Activated CD4-positive, alpha-beta memory T cell treated with anti-CD3 and anti-CD28 coated beads for 36 hours (primary cell): ENCODE measurements at regions of chr7 and their contacts with region 1.

Region 1: DNA sequence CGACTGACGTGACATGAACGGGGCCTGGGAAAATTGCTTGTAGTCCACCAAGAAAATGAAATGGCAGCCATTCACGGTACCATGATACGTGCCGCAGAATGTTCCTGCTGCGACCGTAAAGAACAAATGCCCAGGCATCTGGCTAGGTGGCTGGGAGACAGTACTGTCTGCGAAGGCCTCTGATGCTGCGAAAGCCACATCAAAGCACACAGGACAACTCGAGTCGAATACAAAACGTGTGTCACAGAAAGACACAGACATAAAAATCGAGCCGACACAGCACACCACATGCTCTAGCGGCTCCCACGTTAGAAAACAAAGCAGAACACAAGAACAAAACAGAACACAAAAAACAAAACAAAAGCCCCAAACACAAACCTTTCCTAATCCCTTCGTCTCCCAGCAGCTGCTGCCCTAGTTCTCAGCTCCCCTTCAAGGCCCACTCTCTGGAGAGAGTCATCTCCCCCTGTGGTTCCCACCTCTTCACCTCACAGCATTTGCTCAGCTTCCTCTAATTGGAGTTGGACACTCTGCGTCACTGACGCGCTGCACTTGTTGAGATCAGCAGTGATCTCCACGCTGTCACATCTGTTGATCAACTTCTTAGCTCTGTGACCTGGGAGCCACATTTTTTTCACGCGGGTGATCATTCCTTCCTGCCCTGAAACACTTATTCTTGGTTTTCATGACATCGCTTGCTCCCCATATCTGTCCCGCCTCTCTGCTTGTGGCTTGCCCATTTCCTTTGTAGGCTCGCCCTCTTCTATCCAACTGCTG is 112.2 kb downstream of the CLEC2L start:
- DNase-seq: peak; percentile 72
- H3K4me3 Mint-ChIP-seq: peak overlapping the region; percentile 42
- H3K27ac Mint-ChIP-seq: peak overlapping the region; percentile 63
- H3K4me1 Mint-ChIP-seq: peaks cover 26% of the 10 kb centered on the region
- H3K27me3 Mint-ChIP-seq: no peaks in the 10 kb centered on the region

Region 2: DNA sequence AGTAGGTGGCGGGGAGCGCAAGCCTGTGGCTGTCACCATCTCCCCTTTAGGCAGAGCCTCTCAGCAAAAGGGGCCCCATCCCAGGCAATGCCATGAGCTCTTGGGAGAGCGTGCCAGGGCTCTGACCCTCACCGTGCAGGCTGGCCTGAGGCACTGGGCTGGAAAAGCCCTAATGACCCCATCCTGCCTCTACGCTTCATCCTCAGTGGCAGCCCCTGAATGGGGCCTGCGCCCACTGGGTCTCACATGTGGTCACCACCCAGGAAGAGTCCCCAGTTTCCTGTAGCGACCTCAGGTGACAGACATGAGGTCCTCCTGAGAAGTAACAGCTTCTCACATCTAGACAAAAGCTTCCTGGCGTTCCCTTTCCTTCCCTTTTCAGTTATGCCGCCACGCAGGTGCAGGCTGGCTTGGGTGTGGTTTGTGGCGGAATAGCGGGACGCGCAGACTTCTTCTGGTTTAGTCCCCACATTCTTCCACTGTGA is 53.0 kb before region 1 on chr7:
- CTCF ChIA-PET with region 1: no interaction called
- POLR2A ChIA-PET with region 1: no interaction called
- intact Hi-C with region 1: no loop called
- DNase-seq: no peak
- H3K4me3 Mint-ChIP-seq: no peak overlapping the region
- H3K27ac Mint-ChIP-seq: no peak overlapping the region
- H3K4me1 Mint-ChIP-seq: no peaks in the 10 kb centered on the region
- H3K27me3 Mint-ChIP-seq: no peaks in the 10 kb centered on the region

Region 3: GRCh38 chr7:139620676-139621344 is 14.9 kb before region 1 on chr7:
- CTCF ChIA-PET with region 1: interaction called, 19 read pairs
- POLR2A ChIA-PET with region 1: interaction called, 3 read pairs
- intact Hi-C with region 1: no loop called
- DNase-seq: peak; percentile 78
- H3K4me3 Mint-ChIP-seq: no peak overlapping the region
- H3K27ac Mint-ChIP-seq: no peak overlapping the region
- H3K4me1 Mint-ChIP-seq: peaks cover 12% of the 10 kb centered on the region
- H3K27me3 Mint-ChIP-seq: no peaks in the 10 kb centered on the region

Region 4: GRCh38 chr7:140017543-140017942 is 381.8 kb after region 1 on chr7:
- CTCF ChIA-PET with region 1: no interaction called
- POLR2A ChIA-PET with region 1: no interaction called
- intact Hi-C with region 1: no loop called
- DNase-seq: no peak
- H3K4me3 Mint-ChIP-seq: no peak overlapping the region
- H3K27ac Mint-ChIP-seq: no peak overlapping the region
- H3K4me1 Mint-ChIP-seq: no peaks in the 10 kb centered on the region
- H3K27me3 Mint-ChIP-seq: no peaks in the 10 kb centered on the region